Activated CD4-positive, alpha-beta memory T cell treated with anti-CD3 and anti-CD28 coated beads, Interleukin-2, amount 10 ng/mL, durations not matched to agents 7 days and 5 days (primary cell): ENCODE measurements at regions of chr2 and their contacts with region 1.

Region 1: DNA sequence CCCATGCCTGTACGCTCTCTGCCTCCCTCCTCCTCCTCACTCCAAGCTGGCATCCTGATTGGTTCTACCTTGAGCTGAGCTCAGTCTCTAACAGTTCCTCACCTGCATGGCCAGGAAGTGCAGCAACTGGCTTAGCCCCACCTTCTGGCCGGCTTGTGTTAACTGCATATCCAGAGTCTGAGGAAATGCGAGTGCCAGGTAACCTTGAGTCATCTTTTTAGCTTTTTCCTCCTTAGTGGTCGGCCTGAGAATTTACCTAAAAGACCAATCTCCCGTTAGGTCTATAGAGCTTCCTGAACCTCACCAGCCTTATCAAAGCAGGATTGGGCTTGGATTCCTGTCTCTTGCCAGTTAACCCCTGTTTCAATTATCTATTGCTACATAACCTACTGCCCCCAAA is 89.5 kb upstream of the STK39 start:
- DNase-seq: peak; percentile 62
- H3K4me3 Mint-ChIP-seq: no peak overlapping the region
- H3K27ac Mint-ChIP-seq: no peak overlapping the region
- H3K4me1 Mint-ChIP-seq: peaks cover 5% of the 10 kb centered on the region
- H3K27me3 Mint-ChIP-seq: peaks cover 6% of the 10 kb centered on the region

Region 2: DNA sequence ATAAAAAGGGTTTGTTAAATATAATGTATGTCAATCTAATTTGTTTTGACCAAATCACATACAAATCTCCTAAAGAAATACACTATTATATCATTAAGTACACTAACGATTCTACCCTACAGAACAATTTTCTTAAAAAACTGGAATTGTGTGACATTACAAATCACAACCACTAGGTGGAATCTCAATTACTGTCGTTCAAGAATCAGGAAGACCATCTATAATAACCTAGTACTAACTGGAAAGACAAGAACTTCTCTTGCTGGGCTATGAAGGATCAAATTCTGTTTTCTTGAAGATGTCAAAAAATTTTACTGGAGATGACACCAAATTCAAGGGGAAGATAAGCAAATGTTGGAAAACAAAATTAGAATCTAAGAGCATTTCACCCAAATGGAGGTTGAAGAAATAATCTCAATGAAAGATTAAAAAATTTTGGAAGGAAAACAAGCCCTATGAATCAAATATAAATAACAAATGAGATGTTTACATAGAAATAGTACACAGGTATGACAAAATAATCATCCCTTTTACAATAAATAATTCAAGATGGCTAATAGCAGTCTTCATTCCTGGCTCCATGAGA is 200.4 kb before region 1 on chr2:
- CTCF ChIA-PET with region 1: interaction called, 14 read pairs
- POLR2A ChIA-PET with region 1: no interaction called
- DNase-seq: no peak
- H3K4me3 Mint-ChIP-seq: no peak overlapping the region
- H3K27ac Mint-ChIP-seq: no peak overlapping the region
- H3K4me1 Mint-ChIP-seq: peaks cover 12% of the 10 kb centered on the region
- H3K27me3 Mint-ChIP-seq: no peaks in the 10 kb centered on the region

Region 3: GRCh38 chr2:168160897-168161296 is 176.0 kb before region 1 on chr2:
- CTCF ChIA-PET with region 1: interaction called, 14 read pairs
- POLR2A ChIA-PET with region 1: interaction called, 3 read pairs
- DNase-seq: no peak
- H3K4me3 Mint-ChIP-seq: no peak overlapping the region
- H3K27ac Mint-ChIP-seq: no peak overlapping the region
- H3K4me1 Mint-ChIP-seq: peaks cover 15% of the 10 kb centered on the region
- H3K27me3 Mint-ChIP-seq: no peaks in the 10 kb centered on the region

Region 4: DNA sequence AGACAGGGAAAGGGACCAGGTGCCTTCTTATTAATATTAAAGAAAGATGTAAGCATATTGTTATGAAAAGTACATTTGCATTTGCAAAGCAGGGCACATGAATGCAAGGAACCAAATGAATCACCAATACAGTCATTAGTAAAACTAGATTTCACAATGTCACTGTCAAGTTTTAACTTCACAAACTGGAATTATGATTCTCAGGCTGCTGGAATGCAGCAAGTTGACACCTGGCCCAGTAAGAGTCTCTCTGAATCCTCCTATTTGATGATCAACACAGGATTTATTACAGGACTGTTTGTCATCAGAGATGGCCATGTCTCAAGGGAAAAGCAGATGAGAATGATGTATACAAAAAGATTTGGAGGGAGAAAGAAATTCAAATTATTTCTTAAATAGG is 16.6 kb before region 1 on chr2:
- CTCF ChIA-PET with region 1: no interaction called
- POLR2A ChIA-PET with region 1: no interaction called
- DNase-seq: no peak
- H3K4me3 Mint-ChIP-seq: no peak overlapping the region
- H3K27ac Mint-ChIP-seq: no peak overlapping the region
- H3K4me1 Mint-ChIP-seq: peaks cover 11% of the 10 kb centered on the region
- H3K27me3 Mint-ChIP-seq: peaks cover 28% of the 10 kb centered on the region